Vagina (tissue), 2 donors: ENCODE measurements at regions of chr18 and their contacts with region 1.

Region 1: DNA sequence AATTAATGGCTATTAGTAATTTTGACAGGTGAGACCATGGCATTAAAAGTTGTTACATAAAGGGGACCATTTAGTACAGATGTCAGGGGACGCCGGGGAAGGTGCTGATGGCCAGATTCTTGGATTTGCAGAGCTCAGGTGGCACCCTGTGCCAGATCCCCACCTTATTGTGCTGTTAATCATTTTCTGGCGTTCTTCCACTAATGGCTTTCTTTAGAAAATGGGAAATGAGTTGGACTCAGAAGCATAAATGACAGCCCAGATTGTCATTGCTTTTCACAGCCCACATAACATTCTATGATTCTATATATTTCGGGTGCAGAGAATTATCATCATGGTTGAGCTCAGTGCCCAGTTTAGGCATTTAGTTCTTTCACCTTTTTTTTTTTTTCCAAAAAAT is 257.2 kb upstream of the TCF4 start:
- DNase-seq: no peak
- H3K4me3 ChIP-seq: no peak overlapping the region
- H3K27ac ChIP-seq: no peak overlapping the region
- H3K4me1 ChIP-seq: no peaks in the 10 kb centered on the region
- H3K27me3 ChIP-seq: no peaks in the 10 kb centered on the region
- CTCF ChIP-seq: no peak
- POLR2A ChIP-seq: no peak

Region 2: GRCh38 chr18:56743115-56743514 is 897.9 kb after region 1 on chr18:
- intact Hi-C with region 1: loop called (anchors 5 kb)
- DNase-seq: no peak
- H3K4me3 ChIP-seq: no peak overlapping the region
- H3K27ac ChIP-seq: no peak overlapping the region
- H3K4me1 ChIP-seq: no peaks in the 10 kb centered on the region
- H3K27me3 ChIP-seq: no peaks in the 10 kb centered on the region
- CTCF ChIP-seq: no peak
- POLR2A ChIP-seq: no peak

Region 3: DNA sequence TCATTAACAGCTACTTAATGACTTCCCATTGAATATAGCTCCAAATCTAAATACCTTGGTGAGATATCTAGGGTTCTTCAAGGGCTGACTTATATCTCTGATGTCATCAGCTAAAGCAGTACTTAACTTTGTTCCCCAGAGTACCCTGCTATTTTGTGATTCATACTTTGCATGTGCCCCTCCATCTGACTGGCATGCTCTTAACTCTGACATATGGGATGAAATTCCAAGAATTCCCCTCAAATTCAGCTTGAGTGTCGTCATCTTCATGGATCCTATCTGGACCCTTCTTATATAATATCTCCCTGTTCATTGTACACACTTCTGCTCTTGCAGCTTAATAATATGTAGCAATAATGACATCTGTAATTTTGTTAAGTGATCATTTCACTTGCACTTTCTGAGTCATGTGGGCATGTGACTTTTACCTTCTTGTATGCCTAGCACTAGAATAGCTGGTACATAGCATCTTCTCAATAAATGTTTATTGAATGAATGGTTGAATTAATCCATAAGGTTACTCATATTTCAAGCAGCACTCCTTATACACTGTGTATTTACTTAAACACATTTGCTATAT is 978.9 kb after region 1 on chr18:
- intact Hi-C with region 1: no loop called
- DNase-seq: no peak
- H3K4me3 ChIP-seq: no peak overlapping the region
- H3K27ac ChIP-seq: no peak overlapping the region
- H3K4me1 ChIP-seq: no peaks in the 10 kb centered on the region
- H3K27me3 ChIP-seq: no peaks in the 10 kb centered on the region
- CTCF ChIP-seq: no peak
- POLR2A ChIP-seq: no peak